A549 (cell line): ENCODE measurements at regions of chr6 and their contacts with region 1.

Region 1: GRCh38 chr6:41367700-41368099 is 32.3 kb downstream of the NCR2 start:
- DNase-seq: peak; percentile 56 to 59
- ATAC-seq: peak; percentile 93 to 96
- H3K4me3 ChIP-seq: no peak overlapping the region
- H3K27ac ChIP-seq: no peak overlapping the region
- H3K4me1 ChIP-seq: peaks cover 5% of the 10 kb centered on the region; the same call in 1 of the 3 replicates
- CTCF ChIP-seq: peak; percentile 68
- EP300 ChIP-seq: no peak
- POLR2A ChIP-seq: no peak
- RAD21 ChIP-seq: peak; percentile 85

Region 2: DNA sequence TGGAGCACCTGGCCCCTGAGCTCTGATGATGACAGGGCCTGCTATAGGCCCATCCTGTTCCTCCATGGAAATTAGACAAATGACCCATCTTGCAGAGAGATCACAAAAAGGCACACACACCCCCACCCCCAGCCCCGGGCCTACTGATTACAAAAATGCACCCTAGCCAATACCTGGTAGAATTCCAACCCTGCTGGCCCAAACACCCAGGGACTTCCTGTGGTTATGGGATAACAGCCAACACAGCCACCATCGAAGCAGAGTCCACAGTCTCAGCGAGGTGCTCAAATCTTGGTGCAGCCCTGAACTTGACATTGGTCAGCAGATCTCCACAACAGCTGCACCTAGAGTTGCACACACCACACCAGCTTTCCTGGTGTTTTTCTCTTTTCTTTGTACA is 15.3 kb before region 1 on chr6:
- CTCF ChIA-PET with region 1: interaction called, 27 read pairs
- POLR2A ChIA-PET with region 1: no interaction called
- DNase-seq: no peak
- ATAC-seq: no peak
- H3K4me3 ChIP-seq: no peak overlapping the region
- H3K27ac ChIP-seq: no peak overlapping the region
- H3K4me1 ChIP-seq: no peaks in the 10 kb centered on the region
- CTCF ChIP-seq: no peak
- EP300 ChIP-seq: no peak
- POLR2A ChIP-seq: no peak
- RAD21 ChIP-seq: no peak

Region 3: DNA sequence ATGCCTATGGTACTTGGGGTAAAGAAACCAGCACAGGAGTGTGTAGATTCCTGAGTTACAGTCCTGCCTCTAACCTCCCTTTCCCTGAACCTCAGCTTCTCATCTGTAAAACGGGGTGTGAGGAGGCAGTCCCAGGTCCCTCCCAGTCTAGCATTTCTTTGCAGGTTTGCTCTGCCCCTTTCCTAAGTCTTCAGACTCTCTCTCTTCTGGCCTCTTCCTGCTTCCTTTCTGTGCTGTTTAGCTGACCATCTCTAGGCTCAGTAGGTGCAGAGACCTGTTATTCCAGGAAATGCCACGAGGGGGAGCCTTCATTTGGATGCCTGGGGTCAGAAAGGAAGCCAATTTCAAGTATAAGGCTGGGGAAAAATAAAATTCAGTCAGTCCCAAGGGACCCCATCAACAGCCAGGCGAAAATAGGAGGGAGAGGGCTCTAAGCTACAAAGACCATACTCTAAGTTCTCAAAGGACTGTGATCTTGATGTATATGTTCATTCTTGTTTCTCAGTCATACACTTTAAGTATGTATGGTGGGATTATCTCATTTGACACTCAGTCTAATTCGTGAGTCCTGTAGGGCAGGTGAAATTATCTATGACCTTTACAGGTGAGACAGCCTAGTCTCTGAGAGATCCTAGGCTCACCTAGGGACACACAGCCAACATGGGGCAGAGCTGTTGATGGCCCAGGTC is 56.8 kb after region 1 on chr6:
- CTCF ChIA-PET with region 1: interaction called, 12 read pairs
- POLR2A ChIA-PET with region 1: no interaction called
- DNase-seq: peak; percentile 64
- ATAC-seq: peak; percentile 75 to 89; a peak in 5 of 6 replicates
- H3K4me3 ChIP-seq: no peak overlapping the region
- H3K27ac ChIP-seq: peak overlapping the region in 1 of 2 experiments; percentile 59; a peak in 2 of 6 replicates
- H3K4me1 ChIP-seq: 0 out of 3 replicates have a peak, but pooled peaks cover 4% of the 10 kb centered on the region
- CTCF ChIP-seq: peak; percentile 63
- EP300 ChIP-seq: no peak
- POLR2A ChIP-seq: no peak
- RAD21 ChIP-seq: peak; percentile 59 to 63; a peak in 4 of 5 replicates

Region 4: DNA sequence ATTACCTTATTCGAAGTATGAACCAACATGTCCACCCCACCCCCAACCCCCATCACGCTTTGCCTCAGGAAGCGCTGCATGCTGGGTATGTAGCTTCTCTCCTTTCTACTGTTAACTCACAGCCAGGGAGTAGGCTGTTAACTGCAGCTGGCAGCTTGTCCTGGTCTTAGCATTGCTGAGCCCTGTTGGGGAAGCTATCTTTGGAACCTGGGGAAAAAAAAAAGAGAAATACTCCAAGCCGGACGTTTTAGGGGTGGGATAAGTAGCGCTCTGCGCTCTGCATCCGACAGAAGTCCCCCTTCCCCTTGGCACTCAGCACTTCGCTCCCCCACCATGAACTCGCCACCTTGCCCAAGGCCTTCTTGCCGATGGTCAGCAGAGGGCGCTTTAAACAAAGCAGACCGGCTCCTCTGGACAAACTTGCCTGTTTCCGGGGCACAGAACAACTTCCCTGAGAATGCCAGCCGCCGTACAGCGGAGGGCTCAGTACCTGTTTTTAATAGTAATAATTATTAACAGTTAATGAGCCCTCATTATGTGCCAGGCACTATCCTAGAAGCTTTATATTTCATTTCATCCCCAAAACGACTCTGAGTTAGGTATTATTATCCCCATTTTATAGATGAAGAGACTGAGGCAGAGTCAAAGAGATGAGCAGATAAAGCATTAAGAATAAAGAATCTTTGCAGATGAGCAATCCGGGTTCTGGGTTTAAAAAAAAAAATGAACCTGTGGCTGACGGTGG is 235.3 kb after region 1 on chr6:
- CTCF ChIA-PET with region 1: interaction called, 87 read pairs
- POLR2A ChIA-PET with region 1: no interaction called
- DNase-seq: peak; percentile 68 to 80
- ATAC-seq: peak; percentile 83 to 87
- H3K4me3 ChIP-seq: peak overlapping the region; percentile 23; the same call in 1 of the 3 replicates
- H3K27ac ChIP-seq: peak overlapping the region; percentile 59 to 80; a peak in 5 of 6 replicates
- H3K4me1 ChIP-seq: peaks cover 4% of the 10 kb centered on the region; the same call in 1 of the 3 replicates
- CTCF ChIP-seq: peak; percentile 79
- EP300 ChIP-seq: no peak
- POLR2A ChIP-seq: no peak
- RAD21 ChIP-seq: peak; percentile 82 to 83

Region 5: GRCh38 chr6:41683510-41684310 is 316.0 kb after region 1 on chr6:
- CTCF ChIA-PET with region 1: interaction called, 214 read pairs
- POLR2A ChIA-PET with region 1: no interaction called
- DNase-seq: peak; percentile 53 to 65
- ATAC-seq: peak; percentile 84 to 90
- H3K4me3 ChIP-seq: no peak overlapping the region
- H3K27ac ChIP-seq: peak overlapping the region in 1 of 2 experiments; percentile 56; a peak in 2 of 6 replicates
- H3K4me1 ChIP-seq: 0 out of 3 replicates have a peak, but pooled peaks cover 3% of the 10 kb centered on the region
- CTCF ChIP-seq: peak; percentile 74
- EP300 ChIP-seq: no peak
- POLR2A ChIP-seq: no peak
- RAD21 ChIP-seq: peak; percentile 75 to 83

Region 6: DNA sequence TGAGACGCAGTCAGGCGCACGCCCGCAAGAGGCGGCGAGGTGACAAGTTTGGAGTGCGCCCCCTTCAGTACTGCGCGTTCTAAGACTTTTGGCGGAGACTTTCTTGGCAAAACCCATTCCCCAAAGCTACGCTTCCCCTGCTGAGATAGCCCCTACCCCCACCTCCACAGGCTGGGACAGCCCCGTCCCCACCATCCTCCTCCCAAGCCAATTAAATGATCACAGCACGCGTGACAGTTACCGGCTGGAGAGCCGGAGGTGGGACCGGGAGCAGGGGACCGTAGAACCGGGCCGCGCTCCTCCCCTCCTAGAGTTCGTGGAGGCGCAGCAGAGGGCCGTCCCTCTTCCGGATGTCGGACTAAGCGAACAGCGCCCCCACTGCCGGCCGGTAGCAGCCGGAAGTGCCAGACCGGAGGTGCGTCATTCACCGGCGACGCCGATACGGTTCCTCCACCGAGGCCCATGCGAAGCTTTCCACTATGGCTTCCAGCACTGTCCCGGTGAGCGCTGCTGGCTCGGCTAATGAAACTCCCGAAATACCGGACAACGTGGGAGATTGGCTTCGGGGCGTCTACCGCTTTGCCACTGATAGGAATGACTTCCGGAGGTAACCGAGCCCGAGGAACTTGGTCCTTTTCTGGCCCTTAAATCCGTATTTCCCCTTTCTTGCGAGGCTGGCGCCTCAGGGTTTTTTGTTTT is 419.7 kb after region 1 on chr6 and contains the start of gene TOMM6:
- CTCF ChIA-PET with region 1: interaction called, 18 read pairs
- POLR2A ChIA-PET with region 1: no interaction called
- DNase-seq: peak; percentile 70 to 94
- ATAC-seq: peak; percentile 87 to 90
- H3K4me3 ChIP-seq: peak within 1 kb of the TSS; percentile 65
- H3K27ac ChIP-seq: peak within 1 kb of the TSS; percentile 85 to 97
- H3K4me1 ChIP-seq: peaks cover 14% of the 10 kb centered on the region
- CTCF ChIP-seq: peak; percentile 74
- EP300 ChIP-seq: no peak
- POLR2A ChIP-seq: peak; percentile 63
- RAD21 ChIP-seq: no peak
- polyA plus RNA-seq, gene TOMM6: 217 and 262 TPM in 2 replicates